ENCODE measurements at regions of chr17 and their contacts with region 1.

Region 1: GRCh38 chr17:27245230-27245696 is 48.7 kb upstream of the WSB1 start:
- DNase-seq: peak in 8 of 9 donors; percentile 3 to 38 (median 20)
- ATAC-seq: peak; percentile 73
- H3K4me3 ChIP-seq: no peak overlapping the region
- H3K4me3 Mint-ChIP-seq: no peak overlapping the region
- H3K27ac ChIP-seq: no peak overlapping the region
- H3K27ac Mint-ChIP-seq: no peak overlapping the region
- H3K4me1 ChIP-seq: no peaks in the 10 kb centered on the region
- H3K4me1 Mint-ChIP-seq: peaks cover 0 to 21% (median 5%) of the 10 kb centered on the region in 7 donors
- H3K27me3 ChIP-seq: no peaks in the 10 kb centered on the region
- H3K27me3 Mint-ChIP-seq: peaks cover 4 to 31% (median 7%) of the 10 kb centered on the region in 5 donors

Region 2: GRCh38 chr17:27319536-27320221 is 74.4 kb after region 1 on chr17:
- CTCF ChIA-PET with region 1: no interaction called
- POLR2A ChIA-PET with region 1: no interaction called
- intact Hi-C with region 1: no loop called
- DNase-seq: no peak
- ATAC-seq: peak; percentile 21
- H3K4me3 ChIP-seq: no peak overlapping the region
- H3K4me3 Mint-ChIP-seq: no peak overlapping the region
- H3K27ac ChIP-seq: no peak overlapping the region
- H3K27ac Mint-ChIP-seq: peak overlapping the region in 2 of 9 donors; percentile 0 to 49
- H3K4me1 ChIP-seq: no peaks in the 10 kb centered on the region
- H3K4me1 Mint-ChIP-seq: peaks cover 0 to 6% (median 0%) of the 10 kb centered on the region in 7 donors
- H3K27me3 ChIP-seq: no peaks in the 10 kb centered on the region
- H3K27me3 Mint-ChIP-seq: no peaks in the 10 kb centered on the region

Region 3: DNA sequence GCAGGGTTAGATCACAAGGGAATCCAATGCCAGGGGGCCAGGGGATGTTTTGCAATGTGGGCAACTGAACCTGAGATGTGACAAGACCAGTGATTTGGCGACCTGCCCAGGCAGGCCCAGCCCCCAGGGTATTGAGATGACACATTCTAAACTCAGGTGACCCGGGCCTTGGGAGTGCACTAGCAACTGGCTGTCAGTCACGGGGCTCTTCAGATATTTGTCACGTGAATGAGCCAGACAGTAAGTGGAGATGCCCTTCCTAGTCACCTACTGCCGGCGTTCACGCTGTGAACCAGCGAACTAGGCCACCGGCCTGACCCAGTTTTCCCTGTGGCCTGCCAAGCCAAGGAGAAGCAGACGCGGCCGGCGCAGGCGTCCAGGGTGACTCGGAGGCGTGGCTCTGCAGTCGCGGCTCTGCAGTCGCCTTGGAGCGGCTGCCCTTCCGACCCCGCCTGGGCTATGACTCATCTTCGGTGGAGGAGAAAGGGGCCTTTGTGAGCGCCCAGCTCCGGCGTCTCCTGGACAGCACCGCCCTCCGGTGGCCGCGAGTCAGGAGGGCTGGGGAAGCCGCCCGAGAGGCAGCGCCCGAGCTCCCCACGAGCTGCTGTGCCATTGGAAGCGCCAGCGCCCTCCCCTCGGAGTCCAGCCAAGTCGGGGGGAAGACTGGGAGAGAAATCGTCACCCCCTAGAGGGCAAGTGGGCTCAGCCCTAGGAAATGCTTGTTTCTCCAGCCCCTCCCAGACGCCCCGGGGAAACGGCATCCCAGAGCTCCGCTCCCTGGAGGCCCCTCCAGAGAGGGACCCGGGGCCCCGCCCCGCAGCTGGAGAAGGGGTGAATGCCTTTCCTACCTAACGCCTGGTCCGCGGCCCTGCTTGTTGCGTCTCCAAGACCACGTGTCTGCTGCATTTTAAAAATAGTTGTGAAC is 87.5 kb after region 1 on chr17:
- CTCF ChIA-PET with region 1: interaction called, 7 read pairs
- POLR2A ChIA-PET with region 1: interaction called, 3 read pairs
- intact Hi-C with region 1: loop called in 1 of 2 experiments (anchors 1 kb)
- DNase-seq: peak; percentile 49 to 90 (median 71)
- ATAC-seq: peak; percentile 94
- H3K4me3 ChIP-seq: peak overlapping the region; percentile 72
- H3K4me3 Mint-ChIP-seq: peak overlapping the region; percentile 75 to 90 (median 86)
- H3K27ac ChIP-seq: peak overlapping the region; percentile 23
- H3K27ac Mint-ChIP-seq: peak overlapping the region in 8 of 9 donors; percentile 43 to 92 (median 80)
- H3K4me1 ChIP-seq: peaks cover 6 to 10% of the 10 kb centered on the region in 2 donors
- H3K4me1 Mint-ChIP-seq: peaks cover 6 to 25% (median 18%) of the 10 kb centered on the region in 7 donors
- H3K27me3 ChIP-seq: no peaks in the 10 kb centered on the region
- H3K27me3 Mint-ChIP-seq: peaks cover 0 to 3% (median 0%) of the 10 kb centered on the region in 5 donors

Region 4: DNA sequence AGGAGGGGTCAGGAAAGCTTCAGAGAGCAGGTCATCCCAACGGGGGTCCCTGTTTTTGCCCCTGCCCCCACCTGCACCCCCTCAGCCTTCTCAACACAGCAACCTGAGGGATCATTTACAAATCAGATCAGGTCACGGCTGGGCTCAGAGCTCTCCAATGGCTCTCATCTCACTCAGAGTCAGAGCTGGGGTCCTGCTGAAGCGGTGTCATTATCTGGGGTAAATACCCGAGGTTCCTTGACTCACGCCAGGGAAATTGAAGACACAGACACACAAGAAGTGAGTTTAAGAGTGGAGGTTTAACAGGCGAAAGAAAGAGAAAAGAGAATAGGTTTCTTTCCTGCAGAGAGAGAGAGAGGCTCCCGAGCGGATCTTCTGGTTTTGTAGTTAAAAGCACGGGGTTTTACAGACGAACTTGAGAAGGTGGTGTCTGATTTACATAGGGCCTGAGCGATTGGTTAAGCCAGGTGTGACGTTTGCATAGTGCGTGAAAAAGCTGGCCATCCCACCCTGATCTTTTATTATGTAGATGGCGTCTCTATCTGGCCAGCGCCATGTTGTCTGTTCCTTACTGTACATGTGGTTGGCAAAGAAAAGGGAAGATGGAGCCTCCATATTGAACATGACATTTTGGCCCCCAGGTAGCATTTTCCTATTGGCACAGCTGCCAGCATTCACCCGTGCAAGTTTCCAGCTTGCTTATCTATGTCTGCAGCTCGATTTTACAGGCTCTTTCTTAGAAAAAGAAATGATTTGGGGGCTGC is 100.1 kb after region 1 on chr17:
- CTCF ChIA-PET with region 1: no interaction called
- POLR2A ChIA-PET with region 1: no interaction called
- intact Hi-C with region 1: no loop called
- DNase-seq: no peak
- ATAC-seq: no peak
- H3K4me3 ChIP-seq: no peak overlapping the region
- H3K4me3 Mint-ChIP-seq: no peak overlapping the region
- H3K27ac ChIP-seq: no peak overlapping the region
- H3K27ac Mint-ChIP-seq: peak overlapping the region in 1 of 9 donors; percentile 84
- H3K4me1 ChIP-seq: peaks cover 5 to 7% of the 10 kb centered on the region in 2 donors
- H3K4me1 Mint-ChIP-seq: peaks cover 0 to 28% (median 10%) of the 10 kb centered on the region in 7 donors
- H3K27me3 ChIP-seq: no peaks in the 10 kb centered on the region
- H3K27me3 Mint-ChIP-seq: peaks cover 0 to 9% (median 0%) of the 10 kb centered on the region in 5 donors